Activated CD8-positive, alpha-beta memory T cell treated with anti-CD3 and anti-CD28 coated beads, Interleukin-2, amount 10 ng/mL, durations not matched to agents 7 days and 5 days (primary cell): ENCODE measurements at regions of chr10 and their contacts with region 1.

Region 1: DNA sequence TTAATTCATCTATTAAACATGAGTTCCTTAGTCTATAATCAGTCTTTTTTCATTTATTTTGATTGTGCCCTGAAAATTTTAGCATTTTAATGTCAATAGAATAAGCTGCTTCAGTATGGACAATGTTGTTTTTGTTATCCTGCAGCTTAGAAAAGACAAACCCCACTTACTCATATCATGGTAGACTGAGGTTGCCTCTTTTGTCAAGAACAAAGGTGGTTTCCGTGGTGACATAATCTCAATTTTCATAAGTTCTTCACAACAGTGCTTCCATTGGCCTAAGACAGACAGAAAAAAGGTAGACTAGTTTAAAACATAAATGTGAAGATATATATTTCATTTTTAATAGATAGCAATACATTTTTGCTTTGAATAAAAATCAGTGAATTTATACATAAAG is 69.1 kb downstream of the RTKN2 start:
- DNase-seq: no peak
- ATAC-seq: peak; percentile 97
- H3K4me3 Mint-ChIP-seq: no peak overlapping the region
- H3K27ac Mint-ChIP-seq: peak overlapping the region; percentile 29
- H3K4me1 Mint-ChIP-seq: peaks cover 26% of the 10 kb centered on the region
- H3K27me3 Mint-ChIP-seq: no peaks in the 10 kb centered on the region

Region 2: GRCh38 chr10:62183442-62183841 is 16.1 kb before region 1 on chr10:
- CTCF ChIA-PET with region 1: interaction called, 11 read pairs
- DNase-seq: peak; percentile 78
- ATAC-seq: peak; percentile 76
- H3K4me3 Mint-ChIP-seq: peak overlapping the region; percentile 17
- H3K27ac Mint-ChIP-seq: peak overlapping the region; percentile 92
- H3K4me1 Mint-ChIP-seq: peaks cover 74% of the 10 kb centered on the region
- H3K27me3 Mint-ChIP-seq: no peaks in the 10 kb centered on the region